PC-3 (cell line): ENCODE measurements at regions of chr18 and their contacts with region 1.

Region 1: DNA sequence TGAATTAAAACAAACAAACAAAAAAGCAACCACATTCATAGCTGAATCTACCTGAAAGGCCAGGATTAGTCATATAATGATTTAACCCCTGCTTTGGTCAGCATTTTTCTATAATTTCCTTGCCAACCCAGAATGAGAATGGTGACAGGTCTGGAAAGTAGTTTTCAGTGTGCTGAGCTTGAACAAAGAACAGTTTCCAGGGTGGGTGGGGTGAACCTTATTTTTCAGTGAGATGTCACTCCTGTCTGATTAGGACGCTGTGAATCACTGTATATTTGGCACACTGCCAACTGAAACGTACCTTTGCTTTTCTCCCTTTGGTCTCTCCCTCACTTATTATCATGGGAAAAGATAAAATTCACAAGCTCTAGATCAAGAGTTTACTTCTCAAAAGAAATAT is 35.0 kb upstream of the DSC1 start:
- DNase-seq: peak; percentile 34
- ATAC-seq: no peak; the same call in 1 of the 2 replicates
- H3K4me3 ChIP-seq: no peak overlapping the region
- H3K27ac ChIP-seq: peak overlapping the region; percentile 23; the same call in 1 of the 2 replicates
- H3K4me1 ChIP-seq: peaks cover 27% of the 10 kb centered on the region
- H3K27me3 ChIP-seq: no peaks in the 10 kb centered on the region
- CTCF ChIP-seq: no peak

Region 2: DNA sequence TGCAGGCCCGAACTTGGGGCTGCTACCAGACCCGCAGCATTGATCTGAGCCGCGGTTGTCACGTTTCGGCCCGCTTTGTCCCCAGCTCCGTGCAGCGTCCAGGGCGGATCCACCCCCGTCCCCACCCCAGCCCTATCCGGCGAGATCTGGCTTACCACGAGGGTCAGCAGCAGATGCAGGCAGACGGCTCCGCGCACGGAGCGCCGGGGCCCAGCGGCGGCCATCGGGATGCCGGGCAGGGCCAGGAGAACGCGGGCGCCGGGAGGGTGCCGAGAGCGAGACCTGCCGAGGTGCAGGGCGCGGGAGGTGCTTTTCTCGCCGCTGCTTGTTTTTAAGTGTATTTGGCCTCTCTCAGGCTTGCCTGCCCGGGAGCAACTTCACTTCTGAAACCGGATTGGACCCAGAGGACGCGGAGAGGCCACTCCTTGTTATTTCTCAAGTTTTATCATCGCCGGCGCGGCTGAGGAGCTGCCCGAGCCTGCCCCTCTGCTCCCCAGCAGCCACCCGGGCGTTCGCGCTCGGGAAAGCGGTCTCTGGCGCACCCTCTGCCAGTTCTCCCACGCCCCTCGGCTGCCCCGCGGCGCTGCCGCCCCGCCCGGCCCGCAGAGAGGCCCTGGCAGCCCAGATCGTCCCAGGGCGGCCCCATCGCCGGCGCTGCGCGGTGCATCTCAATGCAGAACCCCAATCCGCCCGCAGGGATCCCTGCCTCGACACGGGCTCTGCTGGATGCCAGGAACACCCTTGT is 155.1 kb before region 1 on chr18 and contains the start of gene DSC3:
- CTCF ChIA-PET with region 1: no interaction called
- POLR2A ChIA-PET with region 1: no interaction called
- intact Hi-C with region 1: no loop called
- DNase-seq: peak; percentile 61
- ATAC-seq: peak; percentile 51
- H3K4me3 ChIP-seq: peak within 1 kb of the TSS; percentile 77
- H3K27ac ChIP-seq: peak within 1 kb of the TSS; percentile 63
- H3K4me1 ChIP-seq: peaks cover 40% of the 10 kb centered on the region
- H3K27me3 ChIP-seq: no peaks in the 10 kb centered on the region
- CTCF ChIP-seq: no peak
- total RNA-seq, gene DSC3: 11.1 and 14.6 TPM in 2 replicates

Region 3: DNA sequence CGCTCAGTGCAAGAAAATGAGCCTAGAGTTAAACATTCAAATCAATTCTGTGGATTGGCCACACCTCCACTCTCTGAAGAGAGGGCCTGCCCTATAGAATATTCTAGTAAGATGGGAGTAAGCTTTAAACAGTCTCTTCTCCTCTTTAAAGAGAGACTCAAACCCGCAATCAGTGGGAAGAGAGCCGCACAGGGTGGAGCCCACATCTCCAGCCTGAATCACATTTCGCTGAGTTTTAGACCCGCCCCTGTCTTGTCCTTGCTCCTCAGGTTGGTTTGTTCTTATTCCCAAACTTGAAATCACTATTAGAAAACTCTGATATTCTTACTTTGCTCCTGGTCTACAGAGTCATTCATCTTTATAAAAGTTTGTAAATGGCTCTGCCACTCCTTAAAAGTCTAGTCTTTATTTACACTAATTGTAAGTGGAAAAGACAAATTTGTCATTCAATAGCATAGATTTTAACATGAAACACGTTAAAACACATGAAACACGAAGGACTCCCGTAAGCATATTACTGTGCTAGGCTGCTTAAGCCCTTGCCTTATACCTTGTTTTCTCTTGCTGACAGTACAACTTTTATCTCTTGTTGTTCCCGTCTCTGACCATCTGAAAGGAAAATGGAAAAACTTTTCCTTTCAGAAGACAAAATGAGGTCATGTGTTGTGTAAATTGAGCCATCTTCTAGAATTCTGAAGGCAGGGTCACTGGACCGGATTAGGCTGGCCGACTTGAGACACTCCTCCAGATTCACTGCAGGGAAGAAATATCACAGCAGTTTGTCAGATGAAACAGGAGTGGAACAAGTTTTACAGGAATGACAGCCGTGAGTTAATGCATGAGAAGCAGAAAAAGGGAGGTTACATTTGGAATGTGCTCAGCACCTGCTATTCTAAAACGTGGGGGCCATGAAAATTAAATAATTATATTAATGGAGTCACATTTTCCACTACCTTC is 40.6 kb before region 1 on chr18:
- CTCF ChIA-PET with region 1: no interaction called
- POLR2A ChIA-PET with region 1: no interaction called
- intact Hi-C with region 1: loop called (anchors 5 kb)
- DNase-seq: peak; percentile 74
- ATAC-seq: peak; percentile 96
- H3K4me3 ChIP-seq: peak overlapping the region; percentile 63
- H3K27ac ChIP-seq: peak overlapping the region; percentile 25; the same call in 1 of the 2 replicates
- H3K4me1 ChIP-seq: no peaks in the 10 kb centered on the region
- H3K27me3 ChIP-seq: no peaks in the 10 kb centered on the region
- CTCF ChIP-seq: no peak

Region 4: GRCh38 chr18:31185186-31185950 is 12.3 kb before region 1 on chr18:
- CTCF ChIA-PET with region 1: no interaction called
- POLR2A ChIA-PET with region 1: no interaction called
- intact Hi-C with region 1: loop called (anchors 2 kb)
- DNase-seq: peak; percentile 82
- ATAC-seq: peak; percentile 99
- H3K4me3 ChIP-seq: no peak overlapping the region
- H3K27ac ChIP-seq: peak overlapping the region; percentile 80
- H3K4me1 ChIP-seq: peaks cover 14% of the 10 kb centered on the region
- H3K27me3 ChIP-seq: no peaks in the 10 kb centered on the region
- CTCF ChIP-seq: no peak

Region 5: DNA sequence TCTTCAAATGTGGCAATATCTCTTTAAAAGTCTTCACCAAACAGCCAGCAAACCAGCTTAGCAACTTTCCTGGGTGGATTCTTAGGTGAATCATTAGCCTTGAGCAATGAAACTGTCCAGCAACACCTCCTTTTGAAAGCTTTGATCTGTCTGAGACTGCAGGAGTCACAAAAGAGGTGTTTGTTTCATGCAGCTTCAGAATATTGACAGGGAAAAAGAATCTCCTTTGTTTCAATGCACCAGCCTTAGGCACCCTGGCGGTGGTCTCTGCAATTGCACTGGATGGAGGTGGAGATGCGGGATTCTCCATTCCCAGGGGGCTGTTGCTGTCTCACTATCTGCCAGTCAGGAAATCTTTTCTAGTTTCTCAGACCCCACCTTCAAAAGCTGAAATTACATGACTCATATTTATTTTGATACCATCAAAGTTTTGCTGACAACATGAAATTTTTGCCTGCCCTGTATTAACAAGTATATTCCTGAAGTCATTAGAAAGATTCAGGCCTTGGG is 44.3 kb after region 1 on chr18:
- CTCF ChIA-PET with region 1: no interaction called
- POLR2A ChIA-PET with region 1: no interaction called
- intact Hi-C with region 1: no loop called
- DNase-seq: peak; percentile 85
- ATAC-seq: peak; percentile 93
- H3K4me3 ChIP-seq: peak overlapping the region; percentile 44; the same call in 1 of the 2 replicates
- H3K27ac ChIP-seq: peak overlapping the region; percentile 90
- H3K4me1 ChIP-seq: peaks cover 35% of the 10 kb centered on the region
- H3K27me3 ChIP-seq: no peaks in the 10 kb centered on the region
- CTCF ChIP-seq: peak; percentile 64; the same call in 1 of the 2 replicates